ENCODE measurements at regions of chr12 and their contacts with region 1.

Region 1: DNA sequence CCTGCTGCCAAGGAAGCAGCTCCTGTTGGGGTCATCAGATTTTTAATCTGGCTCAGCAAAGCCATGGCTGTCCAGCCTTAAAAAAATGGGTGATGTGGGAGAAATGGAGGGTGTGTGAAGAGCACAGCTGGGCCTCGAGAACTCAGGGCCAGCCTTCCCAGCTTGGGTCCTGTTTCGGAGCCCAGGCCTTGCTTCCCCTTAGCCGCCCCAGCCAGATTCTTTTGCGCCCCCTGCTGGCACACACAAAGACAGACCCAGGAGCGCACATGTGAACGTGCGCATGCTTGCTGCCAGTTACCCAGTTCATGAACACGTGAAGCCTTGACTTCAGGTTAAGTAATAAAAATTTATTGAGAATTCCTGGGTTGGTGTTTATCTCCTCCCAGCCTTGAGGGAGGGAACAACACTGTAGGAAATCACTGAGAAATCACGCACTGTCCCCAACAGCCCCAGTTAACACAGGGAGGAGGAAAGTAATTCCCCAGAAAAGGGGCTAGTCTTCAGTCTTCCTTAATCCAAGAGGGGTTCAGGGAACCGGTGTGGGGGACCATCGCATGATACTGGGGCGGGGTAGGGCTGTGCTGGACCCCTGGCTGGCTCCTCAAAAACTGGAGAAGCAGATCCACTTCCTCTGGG is 5.3 kb downstream of the PHB2 start:
- DNase-seq: peak; percentile 89 to 93
- ATAC-seq: peak; percentile 68 to 83 (median 77)
- H3K4me3 ChIP-seq: no peak overlapping the region
- H3K27ac ChIP-seq: peak overlapping the region; percentile 85
- H3K4me1 ChIP-seq: peaks cover 29% of the 10 kb centered on the region
- H3K27me3 ChIP-seq: no peaks in the 10 kb centered on the region
- CTCF ChIP-seq: peak; percentile 87

Region 2: GRCh38 chr12:6921996-6922946 is 42.9 kb before region 1 on chr12:
- intact Hi-C with region 1: loop called (anchors 1 to 5 kb)
- DNase-seq: no peak
- ATAC-seq: no peak
- H3K4me3 ChIP-seq: no peak overlapping the region
- H3K27ac ChIP-seq: no peak overlapping the region
- H3K4me1 ChIP-seq: peaks cover 28% of the 10 kb centered on the region
- H3K27me3 ChIP-seq: no peaks in the 10 kb centered on the region
- CTCF ChIP-seq: no peak

Region 3: GRCh38 chr12:7018350-7019042 is 53.4 kb after region 1 on chr12 and contains the start of gene LPCAT3:
- intact Hi-C with region 1: loop called in 1 of 2 experiments (anchors 5 kb)
- DNase-seq: peak; percentile 99
- ATAC-seq: peak; percentile 92 to 97 (median 95)
- H3K4me3 ChIP-seq: peak within 1 kb of the TSS; percentile 97
- H3K27ac ChIP-seq: peak within 1 kb of the TSS; percentile 94
- H3K4me1 ChIP-seq: peaks cover 31% of the 10 kb centered on the region
- H3K27me3 ChIP-seq: no peaks in the 10 kb centered on the region
- CTCF ChIP-seq: peak; percentile 81
- total RNA-seq, gene LPCAT3: 24.0 to 56.5 (median 41.6) TPM

Measured in psoas muscle (tissue), 8 donors.